Mammary epithelial cell (primary cell): ENCODE measurements at regions of chrX and their contacts with region 1.

Region 1: GRCh38 chrX:11100281-11101035 is 10.7 kb upstream of the HCCS start:
- DNase-seq: peak; percentile 61
- H3K4me3 ChIP-seq: no peak overlapping the region
- H3K27ac ChIP-seq: peak overlapping the region; percentile 47
- H3K4me1 ChIP-seq: peaks cover 6% of the 10 kb centered on the region
- H3K27me3 ChIP-seq: no peaks in the 10 kb centered on the region
- CTCF ChIP-seq: peak; percentile 29 to 51

Region 2: DNA sequence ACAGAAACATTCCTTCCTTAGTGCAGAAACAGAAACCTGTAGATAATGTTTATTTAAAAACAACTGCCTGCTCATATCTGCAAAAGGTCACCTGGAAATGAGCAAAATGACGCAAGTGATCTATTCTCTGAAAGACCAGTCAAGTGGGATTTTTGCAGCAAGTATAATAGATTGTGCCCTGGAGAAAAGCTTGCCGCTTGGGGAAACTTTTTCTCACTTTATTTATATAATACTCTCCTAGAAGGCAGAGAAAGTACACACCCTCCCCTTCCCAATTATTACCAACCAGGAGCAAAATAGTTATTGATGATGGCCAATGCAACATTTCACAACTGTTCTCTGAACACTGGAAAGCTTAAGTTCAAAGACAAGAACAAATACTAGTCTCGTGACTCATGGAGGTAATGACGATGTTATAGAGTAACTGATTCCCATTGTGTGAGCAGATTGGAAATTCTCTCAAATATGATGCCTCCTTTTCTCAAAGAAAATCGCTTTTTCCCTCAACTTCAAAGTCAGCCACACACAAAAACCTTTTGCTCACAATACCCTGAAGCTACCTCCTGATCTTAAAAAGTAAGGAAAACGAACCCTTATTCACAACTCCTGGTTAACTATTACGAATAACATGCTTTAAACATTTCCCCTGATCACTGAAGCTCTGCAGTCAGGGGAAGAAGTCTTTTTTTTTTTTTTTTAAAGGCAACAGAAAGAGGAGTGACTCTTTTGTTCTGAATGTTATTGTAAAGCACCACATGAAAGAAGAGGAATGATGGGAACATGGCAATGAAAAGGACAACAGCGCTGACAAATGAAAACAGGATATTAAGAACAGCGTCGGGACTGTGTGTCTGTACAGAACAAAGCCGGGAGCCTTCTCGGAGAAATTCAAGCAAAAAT is 521.1 kb before region 1 on chrX:
- CTCF ChIA-PET with region 1: interaction called, 16 read pairs
- dilution Hi-C with region 1: no loop called
- in situ Hi-C with region 1: no loop called
- intact Hi-C with region 1: no loop called
- DNase-seq: peak; percentile 69
- H3K4me3 ChIP-seq: peak overlapping the region in 2 of 3 experiments; percentile 35 to 42
- H3K27ac ChIP-seq: peak overlapping the region; percentile 96
- H3K4me1 ChIP-seq: peaks cover 14% of the 10 kb centered on the region
- H3K27me3 ChIP-seq: no peaks in the 10 kb centered on the region
- CTCF ChIP-seq: no peak

Region 3: GRCh38 chrX:10722851-10723250 is 377.6 kb before region 1 on chrX:
- CTCF ChIA-PET with region 1: no interaction called
- dilution Hi-C with region 1: no loop called
- in situ Hi-C with region 1: no loop called
- intact Hi-C with region 1: loop called (anchors 1 kb)
- DNase-seq: peak; percentile 23
- H3K4me3 ChIP-seq: no peak overlapping the region
- H3K27ac ChIP-seq: no peak overlapping the region
- H3K4me1 ChIP-seq: no peaks in the 10 kb centered on the region
- H3K27me3 ChIP-seq: no peaks in the 10 kb centered on the region
- CTCF ChIP-seq: peak; percentile 75 to 83

Region 4: GRCh38 chrX:10755439-10756334 is 344.8 kb before region 1 on chrX:
- CTCF ChIA-PET with region 1: no interaction called
- dilution Hi-C with region 1: no loop called
- in situ Hi-C with region 1: no loop called
- intact Hi-C with region 1: loop called (anchors 5 kb)
- DNase-seq: no peak
- H3K4me3 ChIP-seq: no peak overlapping the region
- H3K27ac ChIP-seq: no peak overlapping the region
- H3K4me1 ChIP-seq: peaks cover 13% of the 10 kb centered on the region
- H3K27me3 ChIP-seq: no peaks in the 10 kb centered on the region
- CTCF ChIP-seq: no peak

Region 5: DNA sequence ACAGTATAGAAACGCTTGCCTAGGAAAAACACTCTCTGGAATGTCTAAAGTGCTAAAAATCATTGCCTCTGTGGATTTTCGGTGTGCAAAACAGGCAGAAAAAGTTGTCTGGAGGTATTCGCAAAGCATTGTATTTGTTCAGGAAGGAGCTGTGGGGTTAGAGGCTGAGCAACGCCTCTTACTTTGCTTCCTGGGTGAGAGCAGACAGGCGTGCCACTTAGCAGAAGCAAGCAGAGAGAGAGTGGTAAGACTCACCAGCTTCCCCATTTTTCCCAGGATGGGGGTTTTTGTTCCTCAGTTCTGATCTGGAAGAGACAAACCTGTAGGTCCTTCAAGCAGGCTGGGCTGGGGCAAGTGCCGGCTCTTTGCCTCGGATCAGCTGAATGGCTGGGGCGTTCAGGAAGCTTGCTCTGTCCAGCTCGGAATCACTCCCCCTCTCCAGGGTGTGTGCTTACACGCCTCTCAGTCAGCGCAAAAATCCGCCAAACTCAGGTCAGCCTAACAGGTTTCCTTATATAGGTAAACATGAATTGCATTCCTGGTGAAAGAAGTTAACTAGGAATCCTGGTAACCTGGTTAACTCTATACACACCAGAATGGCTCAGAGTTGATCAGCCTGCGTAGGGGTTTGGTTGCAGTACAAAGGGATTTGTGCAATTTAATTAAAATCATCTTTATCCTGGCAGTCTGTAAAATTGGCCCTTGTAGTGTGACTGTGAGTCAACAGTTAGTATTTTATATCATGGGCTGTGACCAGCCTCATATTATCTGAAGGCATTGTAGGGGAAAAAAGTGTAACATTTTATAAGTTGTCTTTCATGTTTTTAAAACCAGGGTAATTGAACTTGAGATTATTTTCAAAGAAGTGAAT is 266.9 kb before region 1 on chrX:
- CTCF ChIA-PET with region 1: no interaction called
- dilution Hi-C with region 1: no loop called
- in situ Hi-C with region 1: no loop called
- intact Hi-C with region 1: loop called (anchors 2 kb)
- DNase-seq: peak; percentile 61
- H3K4me3 ChIP-seq: peak overlapping the region; percentile 34 to 50 (median 41)
- H3K27ac ChIP-seq: peak overlapping the region; percentile 34
- H3K4me1 ChIP-seq: no peaks in the 10 kb centered on the region
- H3K27me3 ChIP-seq: no peaks in the 10 kb centered on the region
- CTCF ChIP-seq: no peak

Region 6: DNA sequence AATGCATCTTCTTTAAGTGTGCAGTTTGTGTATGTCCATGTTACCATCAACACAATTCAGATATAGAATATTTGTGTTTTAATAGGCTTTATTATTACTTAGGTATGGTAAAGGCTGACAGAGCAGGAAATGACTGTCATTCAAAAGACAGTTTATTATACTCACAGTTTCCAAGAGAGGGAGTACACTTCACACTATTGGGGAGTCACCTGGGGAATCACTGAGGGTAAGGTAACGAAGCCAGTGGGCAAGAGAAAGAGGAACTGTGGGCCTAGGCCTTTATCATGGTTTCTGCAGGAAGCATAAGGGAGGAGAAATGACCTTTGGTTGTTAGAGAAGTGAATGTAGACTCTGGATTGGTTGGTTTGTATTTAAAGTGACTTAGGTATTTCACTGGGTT is 224.5 kb before region 1 on chrX:
- CTCF ChIA-PET with region 1: no interaction called
- dilution Hi-C with region 1: no loop called
- in situ Hi-C with region 1: no loop called
- intact Hi-C with region 1: loop called (anchors 2 kb)
- DNase-seq: no peak
- H3K4me3 ChIP-seq: no peak overlapping the region
- H3K27ac ChIP-seq: no peak overlapping the region
- H3K4me1 ChIP-seq: no peaks in the 10 kb centered on the region
- H3K27me3 ChIP-seq: no peaks in the 10 kb centered on the region
- CTCF ChIP-seq: no peak